Psoas muscle (tissue), 8 donors: ENCODE measurements at regions of chr4 and their contacts with region 1.

Region 1: GRCh38 chr4:109702950-109703663 is at the start of gene CASP6:
- DNase-seq: peak; percentile 87 to 89
- ATAC-seq: peak; percentile 87 to 96 (median 92)
- H3K4me3 ChIP-seq: peak within 1 kb of the TSS; percentile 77
- H3K27ac ChIP-seq: peak within 1 kb of the TSS; percentile 70
- H3K4me1 ChIP-seq: peaks cover 9% of the 10 kb centered on the region
- H3K27me3 ChIP-seq: no peaks in the 10 kb centered on the region
- CTCF ChIP-seq: peak; percentile 71
- total RNA-seq, gene CASP6: 2.7 to 4.6 (median 4.0) TPM

Region 2: DNA sequence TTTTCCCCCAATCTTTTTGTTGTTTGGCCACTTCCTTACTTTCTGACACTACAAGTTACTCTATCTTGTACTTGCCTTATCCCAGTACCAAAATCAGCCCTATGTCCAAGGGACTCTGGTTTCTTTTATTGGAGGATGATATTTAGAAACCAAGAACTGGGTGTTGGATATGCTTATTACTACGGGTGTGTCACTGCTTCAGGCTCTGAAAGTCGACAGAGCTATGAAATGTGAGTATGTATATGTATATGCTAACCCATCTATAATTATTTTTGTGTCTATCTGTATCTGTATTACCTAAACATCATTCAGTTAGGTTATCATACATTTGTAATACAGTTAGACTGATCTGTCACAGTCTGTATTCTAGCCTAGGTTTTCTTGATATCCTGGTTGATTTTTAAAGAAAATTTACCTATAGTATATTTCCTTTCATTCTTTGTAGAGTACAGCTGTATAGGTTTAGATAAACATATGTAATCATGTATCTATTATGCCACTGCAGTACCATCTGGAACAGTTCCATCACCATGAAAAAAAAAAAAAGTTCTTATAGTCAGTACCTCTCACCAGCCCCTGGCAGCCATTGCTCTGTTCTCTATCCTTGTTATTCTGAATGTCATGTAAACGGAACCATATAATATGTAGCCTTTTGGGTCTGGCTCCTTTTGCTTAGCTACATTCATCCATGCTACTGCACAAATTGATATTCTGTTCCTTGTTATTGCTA is 251.4 kb before region 1 on chr4:
- intact Hi-C with region 1: no loop called
- DNase-seq: no peak
- ATAC-seq: no peak
- H3K4me3 ChIP-seq: no peak overlapping the region
- H3K27ac ChIP-seq: no peak overlapping the region
- H3K4me1 ChIP-seq: peaks cover 2% of the 10 kb centered on the region
- H3K27me3 ChIP-seq: no peaks in the 10 kb centered on the region
- CTCF ChIP-seq: no peak

Region 3: DNA sequence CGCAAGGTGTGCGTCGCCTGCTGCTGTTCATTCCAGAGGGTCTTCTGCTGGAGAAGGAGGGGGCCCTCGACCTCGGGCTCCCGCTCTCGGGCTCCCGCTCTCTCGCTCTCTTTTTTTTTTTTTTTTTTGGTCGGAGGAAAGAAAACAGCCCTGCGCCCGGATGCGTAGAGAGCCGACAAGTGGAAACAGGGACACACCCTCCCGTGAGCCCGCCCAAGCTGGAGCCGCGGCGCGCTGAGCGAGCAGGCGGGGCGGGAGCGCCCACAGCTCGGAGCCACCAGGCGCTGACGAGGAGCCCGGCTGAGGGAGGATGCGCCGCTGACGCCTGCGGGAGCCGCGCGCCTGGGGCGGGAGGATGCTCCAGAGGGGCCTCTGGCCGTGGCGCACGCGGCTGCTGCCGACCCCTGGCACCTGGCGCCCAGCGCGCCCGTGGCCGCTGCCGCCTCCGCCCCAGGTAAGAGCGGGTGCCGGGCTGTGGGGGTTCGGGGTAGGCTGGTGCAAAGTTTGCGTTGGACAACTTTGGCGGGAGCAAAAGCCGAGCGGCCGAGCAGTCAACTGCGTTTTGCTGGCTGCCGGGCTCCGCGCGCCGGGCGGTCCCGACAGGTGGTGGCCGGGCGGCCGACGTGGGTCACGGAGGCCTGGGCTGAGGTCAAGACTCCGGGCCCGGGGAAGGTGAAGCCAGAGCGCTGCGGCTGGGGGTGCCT is 143.0 kb before region 1 on chr4 and contains the start of gene MCUB:
- intact Hi-C with region 1: loop called in 1 of 2 experiments (anchors 10 kb)
- DNase-seq: peak; percentile 89 to 90
- ATAC-seq: peak; percentile 83 to 94 (median 90)
- H3K4me3 ChIP-seq: peak within 1 kb of the TSS; percentile 74
- H3K27ac ChIP-seq: peak within 1 kb of the TSS; percentile 74
- H3K4me1 ChIP-seq: peaks cover 3% of the 10 kb centered on the region
- H3K27me3 ChIP-seq: peaks cover 0 to 19% (median 3%) of the 10 kb centered on the region in 3 donors
- CTCF ChIP-seq: no peak
- total RNA-seq, gene MCUB: 1.4 to 2.8 (median 1.7) TPM

Region 4: DNA sequence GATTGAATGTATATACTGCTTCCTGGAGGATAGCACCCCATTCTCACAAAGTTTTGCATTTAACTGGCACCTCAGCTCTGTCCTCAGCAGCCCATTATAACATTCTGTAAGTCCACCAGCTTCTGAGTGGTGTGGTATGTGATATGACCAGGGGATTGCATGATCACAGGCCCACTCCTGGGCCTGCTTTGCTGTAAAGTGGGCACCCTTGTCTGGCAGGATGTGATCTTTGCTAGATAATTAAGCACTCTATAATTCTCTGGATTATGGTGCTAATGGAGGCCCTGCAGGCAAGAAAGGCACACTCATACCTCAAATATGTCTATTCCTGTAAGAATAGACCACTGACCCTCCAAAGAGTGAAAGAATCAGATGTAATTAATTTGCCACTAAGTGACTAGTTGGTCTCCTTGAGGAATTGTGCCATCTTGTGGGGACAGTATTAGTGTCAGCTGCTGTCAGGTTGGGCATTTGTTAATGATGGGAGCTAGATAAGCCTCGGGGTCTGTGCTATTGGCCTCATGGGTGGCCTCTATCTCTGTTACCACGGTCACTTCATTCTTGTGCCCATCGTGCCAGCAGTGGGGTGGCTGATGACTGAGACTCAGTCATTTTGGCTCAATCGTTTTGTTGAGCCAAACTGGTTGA is 100.9 kb after region 1 on chr4:
- intact Hi-C with region 1: loop called in 1 of 2 experiments (anchors 5 kb)
- DNase-seq: no peak
- ATAC-seq: peak in 3 of 4 donors; percentile 46 to 63 (median 53)
- H3K4me3 ChIP-seq: no peak overlapping the region
- H3K27ac ChIP-seq: no peak overlapping the region
- H3K4me1 ChIP-seq: no peaks in the 10 kb centered on the region
- H3K27me3 ChIP-seq: no peaks in the 10 kb centered on the region
- CTCF ChIP-seq: peak; percentile 39

Region 5: DNA sequence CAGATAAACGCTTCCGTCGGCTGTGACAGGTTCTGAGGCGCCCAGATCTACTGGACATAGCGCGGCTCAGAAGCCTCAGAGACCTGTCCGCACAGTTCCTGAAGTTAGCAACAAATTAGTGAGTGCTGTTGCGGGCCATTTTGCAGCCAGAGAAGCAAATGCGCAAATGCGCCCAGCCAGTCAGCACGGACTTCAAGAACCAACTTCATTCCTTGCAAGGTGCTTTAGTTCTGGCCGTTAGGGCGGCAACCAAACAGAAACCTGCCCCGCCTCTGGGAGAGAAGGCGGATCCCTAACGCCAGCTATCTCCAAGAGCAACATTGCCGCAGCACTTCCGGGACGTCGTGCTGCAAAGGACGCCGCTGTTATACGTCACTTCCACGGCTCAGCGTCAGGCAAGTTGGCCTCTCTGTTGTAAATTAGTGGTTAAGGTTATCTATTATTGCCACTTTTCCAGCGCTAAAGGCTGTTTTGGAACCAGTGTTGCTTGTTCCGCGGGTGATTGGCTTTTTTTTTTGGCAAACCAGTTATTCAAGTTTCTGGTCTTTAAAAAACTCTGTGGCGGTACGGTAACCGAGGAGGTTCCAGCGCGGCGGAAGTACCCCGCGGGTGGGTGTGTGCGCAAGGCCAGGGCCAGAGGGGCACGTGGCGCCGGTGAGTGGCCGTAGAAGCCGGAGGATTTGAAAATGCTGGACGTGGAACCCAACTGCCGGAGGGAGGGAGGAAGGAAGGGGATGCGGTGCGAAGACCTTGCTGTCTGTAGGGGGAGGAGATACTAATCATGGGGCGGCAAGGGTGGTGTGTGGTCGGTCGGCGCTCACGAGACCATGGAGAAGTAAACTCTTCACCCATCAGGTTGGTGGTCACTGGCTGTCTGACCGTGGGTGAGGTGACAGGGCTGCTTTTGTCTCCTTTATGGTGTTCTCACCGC is 112.3 kb after region 1 on chr4 and contains the start of gene GAR1:
- intact Hi-C with region 1: loop called in 1 of 2 experiments (anchors 5 kb)
- DNase-seq: peak; percentile 87 to 93
- ATAC-seq: peak; percentile 99 to 100 (median 100)
- H3K4me3 ChIP-seq: peak within 1 kb of the TSS; percentile 92
- H3K27ac ChIP-seq: peak within 1 kb of the TSS; percentile 92
- H3K4me1 ChIP-seq: peaks cover 10% of the 10 kb centered on the region
- H3K27me3 ChIP-seq: no peaks in the 10 kb centered on the region
- CTCF ChIP-seq: no peak
- total RNA-seq, gene GAR1: 7.7 to 17.9 (median 11.3) TPM

Region 6: DNA sequence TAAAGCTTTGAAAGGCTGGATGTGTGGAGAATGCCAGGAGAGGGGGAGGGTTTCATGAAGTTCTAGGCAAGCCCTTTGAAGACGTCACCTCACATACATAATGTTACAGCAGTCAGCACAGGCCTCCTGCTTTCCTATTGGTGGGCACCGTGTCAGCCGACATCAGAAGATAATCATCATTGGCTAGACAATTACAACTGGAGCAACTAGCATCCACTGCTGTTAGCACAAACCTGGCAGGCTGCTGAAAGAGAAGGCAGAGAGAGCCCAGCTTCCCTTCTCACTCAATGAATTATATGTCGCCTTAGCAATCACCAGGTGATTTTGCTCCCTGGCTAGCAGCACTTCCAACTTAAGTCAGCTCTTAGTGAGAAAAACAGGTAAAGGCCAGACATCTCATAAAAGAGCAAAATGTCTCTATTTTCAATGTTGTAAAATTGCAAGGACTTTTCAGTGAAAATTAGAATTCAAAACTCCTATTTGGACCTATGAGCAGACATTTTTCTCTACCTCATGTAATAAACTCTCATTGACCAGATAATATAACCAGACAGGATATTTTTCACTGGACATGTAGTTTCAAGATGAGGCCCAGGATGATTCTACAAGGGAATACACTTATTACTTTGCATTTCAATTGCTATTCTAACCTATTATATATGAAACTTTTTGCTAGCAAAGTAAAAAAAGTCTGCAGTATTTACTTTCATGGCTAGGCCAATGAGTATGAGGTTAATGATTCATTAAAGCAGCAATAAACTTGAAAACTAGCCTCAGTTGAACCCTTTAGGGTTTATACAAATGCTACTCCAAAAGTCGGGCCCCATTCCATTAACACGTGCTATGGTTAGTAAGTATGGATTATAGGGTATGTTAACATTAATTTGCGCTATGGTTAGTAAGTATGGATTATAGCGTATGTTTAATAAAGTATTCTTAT is 491.0 kb after region 1 on chr4:
- intact Hi-C with region 1: no loop called
- DNase-seq: peak in 1 of 2 donors; percentile 50
- ATAC-seq: peak in 1 of 4 donors; percentile 26
- H3K4me3 ChIP-seq: no peak overlapping the region
- H3K27ac ChIP-seq: no peak overlapping the region
- H3K4me1 ChIP-seq: no peaks in the 10 kb centered on the region
- H3K27me3 ChIP-seq: no peaks in the 10 kb centered on the region
- CTCF ChIP-seq: no peak